HepG2 (cell line): ENCODE measurements at regions of chr6 and their contacts with region 1.

Region 1: DNA sequence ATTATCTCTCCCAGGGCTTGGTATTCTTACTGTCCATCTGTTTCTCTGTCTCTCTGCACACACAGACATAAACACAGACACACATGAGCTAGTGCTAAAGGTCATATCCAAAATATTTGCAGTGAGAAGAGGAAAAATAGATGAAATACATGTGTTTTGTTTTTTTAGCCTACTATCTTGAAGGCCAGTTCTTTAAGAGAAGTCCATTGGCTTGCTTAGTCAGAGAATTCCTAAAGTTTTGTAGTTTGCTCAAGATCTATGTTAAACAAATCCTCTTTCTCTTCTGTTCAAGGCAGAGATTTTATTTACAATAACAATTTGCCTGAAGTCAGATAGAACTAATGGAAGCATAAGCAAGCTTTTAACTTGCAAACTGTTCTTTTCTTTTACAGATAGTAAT is 120.0 kb upstream of the AKIRIN2 start:
- DNase-seq: peak; percentile 92
- ATAC-seq: peak; percentile 92
- H3K4me3 ChIP-seq: no peak overlapping the region; a peak in 1 of 6 replicates
- H3K27ac ChIP-seq: no peak overlapping the region
- H3K4me1 ChIP-seq: peaks cover 91% of the 10 kb centered on the region
- H3K27me3 ChIP-seq: no peaks in the 10 kb centered on the region
- CTCF ChIP-seq: no peak
- EP300 ChIP-seq: peak in 1 of 2 experiments; percentile 80; a peak in 2 of 4 replicates
- POLR2A ChIP-seq: no peak
- RAD21 ChIP-seq: no peak

Region 2: GRCh38 chr6:87378947-87379346 is 443.1 kb before region 1 on chr6:
- CTCF ChIA-PET with region 1: no interaction called
- POLR2A ChIA-PET with region 1: no interaction called
- in situ Hi-C with region 1: no loop called
- intact Hi-C with region 1: no loop called
- DNase-seq: no peak
- ATAC-seq: no peak
- H3K4me3 ChIP-seq: no peak overlapping the region
- H3K27ac ChIP-seq: no peak overlapping the region
- H3K4me1 ChIP-seq: no peaks in the 10 kb centered on the region
- H3K27me3 ChIP-seq: no peaks in the 10 kb centered on the region
- CTCF ChIP-seq: no peak
- EP300 ChIP-seq: no peak
- POLR2A ChIP-seq: no peak
- RAD21 ChIP-seq: no peak

Region 3: DNA sequence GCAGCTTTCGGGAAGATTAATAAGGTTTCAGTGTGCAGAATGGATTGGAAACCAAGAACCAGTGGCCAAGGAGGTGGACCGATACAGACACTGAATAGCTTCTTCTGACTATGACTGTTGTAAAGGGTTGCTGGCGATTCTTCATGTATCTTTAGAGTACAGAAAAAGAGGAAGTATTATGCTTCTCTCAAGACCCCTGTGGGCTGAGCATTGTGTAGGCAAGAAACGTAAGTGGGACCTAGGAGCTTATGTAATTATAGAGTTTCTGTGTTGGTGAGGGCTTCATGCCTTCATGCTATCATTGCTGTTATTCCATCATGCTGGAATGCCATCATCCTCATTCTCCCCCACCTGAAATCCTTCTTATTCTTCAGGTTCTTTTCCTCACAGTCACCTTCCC is 14.5 kb before region 1 on chr6:
- CTCF ChIA-PET with region 1: no interaction called
- POLR2A ChIA-PET with region 1: interaction called, 5 read pairs
- in situ Hi-C with region 1: no loop called
- intact Hi-C with region 1: loop called (anchors 2 kb)
- DNase-seq: no peak
- ATAC-seq: no peak
- H3K4me3 ChIP-seq: no peak overlapping the region
- H3K27ac ChIP-seq: no peak overlapping the region
- H3K4me1 ChIP-seq: peaks cover 46% of the 10 kb centered on the region
- H3K27me3 ChIP-seq: no peaks in the 10 kb centered on the region
- CTCF ChIP-seq: no peak
- EP300 ChIP-seq: no peak
- POLR2A ChIP-seq: no peak
- RAD21 ChIP-seq: no peak